Cardiac septum (tissue), 1 donor: ENCODE measurements at regions of chr6 and their contacts with region 1.

Region 1: DNA sequence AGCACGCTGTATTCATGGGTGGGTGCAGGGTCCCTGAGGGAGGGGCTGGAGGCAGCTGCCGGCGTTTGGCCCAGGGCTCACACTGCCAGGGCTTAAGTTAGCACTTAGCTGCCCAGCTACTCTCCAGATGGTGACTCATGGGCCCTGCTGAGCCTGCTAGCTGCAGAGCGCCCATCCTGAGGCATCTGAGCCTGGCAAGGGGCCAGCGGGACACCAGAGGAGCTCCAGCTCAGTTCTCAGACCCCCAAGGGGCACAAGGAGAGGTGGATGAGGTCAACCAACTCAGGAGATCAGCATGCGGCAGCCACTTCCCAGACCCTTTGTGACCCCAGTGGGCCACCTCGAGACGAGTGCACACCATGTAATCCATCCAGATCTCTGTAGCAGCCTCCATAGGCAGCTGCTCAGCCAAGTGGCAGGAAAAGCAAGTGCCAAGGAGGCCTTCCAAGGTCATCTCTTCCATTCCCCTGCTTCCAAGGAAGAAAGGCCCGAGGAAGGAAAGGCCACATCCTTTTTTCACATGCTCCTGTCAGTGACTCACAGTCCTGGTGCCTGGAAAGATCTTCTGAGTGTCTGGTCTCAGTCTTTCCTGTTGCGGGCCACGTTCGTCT is 35.3 kb downstream of the FOXP4 start:
- DNase-seq: no peak

Region 2: DNA sequence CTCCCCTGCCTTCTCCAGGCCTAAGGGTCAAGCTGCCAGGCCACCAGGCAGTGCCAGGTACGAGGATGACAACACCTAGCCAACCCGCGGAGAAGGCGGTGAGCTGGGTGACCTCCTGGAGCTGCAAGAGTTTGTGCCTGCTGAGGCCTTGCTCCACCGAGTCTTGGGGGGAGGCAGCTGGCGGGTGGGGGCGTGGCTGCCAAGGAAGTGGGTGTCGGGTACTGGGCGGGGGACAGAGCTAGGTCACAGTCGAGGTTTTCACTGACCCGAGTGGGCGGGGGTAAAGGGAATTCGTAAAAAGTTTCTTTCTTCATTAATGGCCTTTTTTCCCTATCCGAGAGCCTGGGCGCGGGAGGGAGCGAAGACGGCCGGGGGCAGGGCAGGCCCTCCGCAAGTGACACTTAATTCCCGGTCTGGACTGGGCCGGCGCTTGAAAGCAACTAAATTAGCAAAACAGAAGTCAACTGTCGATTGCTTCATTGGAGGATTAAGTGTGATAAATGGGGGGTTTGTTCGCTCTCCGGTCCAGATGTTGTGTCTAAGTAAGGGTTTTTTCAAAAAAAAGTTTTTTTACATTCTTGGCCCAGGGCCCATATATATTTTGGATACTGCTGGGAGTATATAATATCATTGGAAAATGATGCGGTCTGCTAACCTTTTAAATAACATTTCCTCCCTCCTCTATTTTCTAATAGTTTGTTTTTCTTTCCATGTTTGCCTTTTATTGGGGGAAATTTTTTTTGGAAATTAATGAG is 78.4 kb before region 1 on chr6:
- intact Hi-C with region 1: no loop called
- DNase-seq: no peak

Region 3: DNA sequence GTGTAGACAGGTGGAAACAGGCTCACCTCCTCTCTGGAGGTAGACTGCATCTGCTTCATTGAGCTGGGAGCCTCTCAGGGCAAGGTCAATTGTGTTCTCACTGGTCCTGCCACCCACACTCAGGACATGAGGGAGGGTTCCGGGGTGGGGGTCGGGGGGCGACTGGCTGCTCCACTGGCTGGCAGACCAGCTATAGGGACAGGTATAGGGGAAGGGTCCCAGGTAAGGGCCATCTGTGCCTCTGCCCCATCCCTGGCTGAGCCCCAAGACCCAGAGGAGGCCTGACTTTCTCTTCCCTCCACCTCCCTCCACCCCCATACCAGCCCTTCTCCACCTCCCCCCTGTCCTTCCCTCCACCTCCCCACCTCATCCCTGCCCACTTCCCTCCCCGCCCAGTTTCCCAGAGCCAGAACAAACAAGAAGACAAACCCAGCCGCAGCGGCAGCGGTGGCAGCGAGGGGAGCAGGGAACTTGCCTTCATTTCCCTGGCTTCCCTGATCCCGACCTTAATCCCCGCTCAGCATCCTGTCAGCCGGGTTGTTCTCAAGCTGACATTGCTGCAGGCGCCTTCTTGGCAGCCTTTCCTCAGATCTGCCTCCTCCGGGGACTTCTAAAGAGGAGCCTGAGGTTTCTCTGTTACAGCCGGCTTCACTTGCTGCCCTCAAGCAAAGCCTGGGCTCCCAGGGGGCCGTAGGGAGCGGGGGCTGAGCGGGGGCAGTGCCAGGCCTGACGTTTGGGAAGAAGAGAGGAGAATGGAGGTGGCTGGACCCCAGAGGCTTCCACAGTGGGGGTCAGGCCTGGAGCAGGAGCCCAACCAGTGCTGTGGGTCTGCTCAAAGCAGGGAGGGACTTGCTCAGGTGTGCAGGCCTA is 53.5 kb before region 1 on chr6:
- intact Hi-C with region 1: no loop called
- DNase-seq: no peak

Region 4: DNA sequence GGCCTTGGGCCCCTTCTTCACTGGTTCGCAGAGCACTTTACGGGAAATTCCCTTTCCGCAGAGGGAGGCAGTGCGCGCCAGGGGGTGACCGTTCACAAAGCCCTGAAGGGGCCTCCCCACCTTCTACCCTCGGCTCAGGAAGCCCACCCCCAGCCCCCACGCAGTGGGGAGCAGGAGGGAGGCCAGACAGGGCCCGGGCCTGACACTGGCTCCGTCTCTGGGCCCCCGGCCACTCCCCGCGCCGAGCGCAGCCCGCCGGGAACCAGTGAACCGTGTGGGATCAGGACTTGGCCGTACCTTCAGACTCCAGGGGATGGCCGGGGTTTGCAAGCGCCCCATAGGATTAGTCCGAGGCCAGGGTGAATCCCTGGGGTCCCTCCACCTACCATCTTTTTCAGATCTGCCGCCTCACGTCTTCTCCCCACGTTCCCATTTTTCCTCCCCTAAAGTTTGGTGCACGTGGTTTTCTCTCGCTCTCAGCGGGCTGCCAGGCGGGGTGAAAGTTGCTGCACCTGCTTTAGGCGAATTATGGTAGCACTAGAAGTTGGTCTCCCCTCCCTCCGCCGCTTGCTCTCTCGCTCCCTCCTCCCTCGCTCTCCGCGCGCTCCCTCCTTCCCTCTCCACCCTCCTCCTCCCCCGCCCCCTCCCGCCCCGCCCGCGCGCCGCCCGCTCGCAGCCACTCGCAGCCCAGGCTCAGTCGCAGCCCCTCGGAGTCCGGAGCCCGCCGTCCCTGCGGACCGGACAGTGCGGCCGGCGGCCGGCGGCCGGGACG is 35.6 kb before region 1 on chr6 and contains the start of gene FOXP4:
- intact Hi-C with region 1: loop called (anchors 5 kb)
- DNase-seq: peak; percentile 92
- total RNA-seq, gene FOXP4: 20.3 TPM